Mammary epithelial cell (primary cell): ENCODE measurements at regions of chr10 and their contacts with region 1.

Region 1: DNA sequence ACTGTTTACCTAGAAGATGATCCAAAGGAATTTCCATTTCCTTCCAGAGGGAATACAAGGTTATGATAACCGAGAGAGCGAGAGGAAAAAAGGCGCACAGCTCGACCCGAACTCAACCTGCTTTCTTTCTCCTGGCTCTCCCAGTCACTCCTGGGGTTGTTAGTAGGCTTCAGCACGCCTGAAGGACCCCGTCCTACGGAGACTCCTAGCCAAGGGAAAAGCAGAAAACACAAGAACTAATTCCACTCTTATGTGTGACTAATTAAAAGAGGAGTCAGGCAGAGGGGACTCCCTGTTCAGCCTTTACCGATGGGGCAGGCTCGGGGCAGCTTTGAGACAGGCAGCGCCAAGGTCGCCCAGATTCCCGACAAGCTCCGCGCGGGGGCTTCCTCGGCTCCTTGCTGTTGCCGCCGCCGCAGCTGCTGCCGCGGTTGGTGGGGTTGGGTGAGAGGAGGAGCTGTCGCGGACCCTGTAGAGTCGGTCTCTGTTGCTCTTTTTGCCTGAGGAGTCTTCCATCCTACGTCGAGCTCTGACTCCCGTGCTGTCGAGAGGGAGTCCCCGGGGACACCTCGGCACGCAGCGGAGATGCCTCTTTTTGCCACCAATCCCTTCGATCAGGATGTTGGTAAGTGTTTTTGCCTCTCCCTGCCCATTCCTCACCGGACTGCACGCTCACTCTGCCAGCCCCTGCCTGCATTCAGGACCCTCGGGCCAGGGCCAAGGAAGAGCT is at the start of gene STAM:
- DNase-seq: peak; percentile 90
- H3K4me3 ChIP-seq: peak within 1 kb of the TSS; percentile 83 to 93 (median 83)
- H3K27ac ChIP-seq: peak within 1 kb of the TSS; percentile 98
- H3K4me1 ChIP-seq: peaks cover 21% of the 10 kb centered on the region
- H3K27me3 ChIP-seq: no peaks in the 10 kb centered on the region
- CTCF ChIP-seq: no peak
- total RNA-seq, gene STAM: 32.0 to 35.9 TPM

Region 2: DNA sequence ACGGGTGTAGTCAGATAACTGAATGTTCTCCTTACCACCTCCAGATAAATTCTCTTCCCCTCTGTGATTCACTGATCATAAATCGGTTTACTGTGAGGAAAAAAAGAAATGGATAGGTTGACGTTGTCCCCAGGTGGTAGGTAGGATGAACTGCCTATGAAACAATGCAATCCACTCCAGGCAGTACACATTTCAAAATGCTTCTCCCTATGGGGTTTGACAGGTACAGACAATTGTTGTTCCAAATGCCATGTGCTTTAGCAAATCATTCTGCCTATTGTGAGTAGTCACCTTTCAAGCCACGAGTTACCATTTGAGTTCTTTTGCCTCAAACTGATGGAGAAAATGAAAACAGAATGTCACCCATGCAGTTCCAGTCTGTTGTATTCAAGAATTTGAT is 394.1 kb before region 1 on chr10:
- CTCF ChIA-PET with region 1: no interaction called
- dilution Hi-C with region 1: no loop called
- in situ Hi-C with region 1: no loop called
- intact Hi-C with region 1: no loop called
- DNase-seq: peak; percentile 46
- H3K4me3 ChIP-seq: no peak overlapping the region
- H3K27ac ChIP-seq: no peak overlapping the region
- H3K4me1 ChIP-seq: peaks cover 9% of the 10 kb centered on the region
- H3K27me3 ChIP-seq: no peaks in the 10 kb centered on the region
- CTCF ChIP-seq: peak; percentile 68 to 79

Region 3: GRCh38 chr10:17665747-17666146 is 21.8 kb after region 1 on chr10:
- CTCF ChIA-PET with region 1: no interaction called
- dilution Hi-C with region 1: no loop called
- in situ Hi-C with region 1: no loop called
- intact Hi-C with region 1: loop called (anchors 2 kb)
- DNase-seq: peak; percentile 77
- H3K4me3 ChIP-seq: peak overlapping the region in 1 of 3 experiments; percentile 38
- H3K27ac ChIP-seq: peak overlapping the region; percentile 90
- H3K4me1 ChIP-seq: peaks cover 4% of the 10 kb centered on the region
- H3K27me3 ChIP-seq: no peaks in the 10 kb centered on the region
- CTCF ChIP-seq: no peak

Region 4: DNA sequence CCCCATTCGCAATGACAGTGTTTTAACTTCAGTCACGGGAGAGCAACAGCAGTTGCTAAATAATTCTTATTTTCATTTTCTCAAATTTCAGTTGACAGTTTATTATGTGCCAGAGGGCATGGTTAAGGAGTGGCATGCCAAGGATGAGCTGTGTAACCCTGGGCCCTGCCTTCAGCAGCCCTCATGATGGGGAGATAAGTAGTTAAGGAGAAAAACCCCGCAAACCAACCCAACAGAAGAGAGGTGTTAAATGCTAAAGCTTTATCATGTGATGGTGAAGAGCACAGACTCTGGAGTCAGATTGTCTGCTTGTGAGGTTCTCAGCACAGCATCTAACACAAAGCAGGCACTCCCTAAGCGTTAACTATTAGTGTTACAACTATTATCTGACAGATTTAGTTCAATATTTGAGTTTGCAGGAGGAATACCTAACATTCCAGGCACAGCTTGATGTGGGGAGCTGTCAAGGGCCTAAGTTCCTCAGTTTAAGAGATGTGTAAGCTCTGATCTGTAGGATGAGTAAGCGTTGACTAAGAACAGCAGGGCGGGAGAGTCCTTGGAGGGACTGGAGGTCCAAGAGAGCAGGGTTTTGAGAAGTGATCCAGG is 29.6 kb after region 1 on chr10:
- CTCF ChIA-PET with region 1: no interaction called
- dilution Hi-C with region 1: no loop called
- in situ Hi-C with region 1: no loop called
- intact Hi-C with region 1: loop called (anchors 5 kb)
- DNase-seq: peak; percentile 86
- H3K4me3 ChIP-seq: no peak overlapping the region
- H3K27ac ChIP-seq: peak overlapping the region; percentile 6
- H3K4me1 ChIP-seq: peaks cover 22% of the 10 kb centered on the region
- H3K27me3 ChIP-seq: no peaks in the 10 kb centered on the region
- CTCF ChIP-seq: no peak

Region 5: DNA sequence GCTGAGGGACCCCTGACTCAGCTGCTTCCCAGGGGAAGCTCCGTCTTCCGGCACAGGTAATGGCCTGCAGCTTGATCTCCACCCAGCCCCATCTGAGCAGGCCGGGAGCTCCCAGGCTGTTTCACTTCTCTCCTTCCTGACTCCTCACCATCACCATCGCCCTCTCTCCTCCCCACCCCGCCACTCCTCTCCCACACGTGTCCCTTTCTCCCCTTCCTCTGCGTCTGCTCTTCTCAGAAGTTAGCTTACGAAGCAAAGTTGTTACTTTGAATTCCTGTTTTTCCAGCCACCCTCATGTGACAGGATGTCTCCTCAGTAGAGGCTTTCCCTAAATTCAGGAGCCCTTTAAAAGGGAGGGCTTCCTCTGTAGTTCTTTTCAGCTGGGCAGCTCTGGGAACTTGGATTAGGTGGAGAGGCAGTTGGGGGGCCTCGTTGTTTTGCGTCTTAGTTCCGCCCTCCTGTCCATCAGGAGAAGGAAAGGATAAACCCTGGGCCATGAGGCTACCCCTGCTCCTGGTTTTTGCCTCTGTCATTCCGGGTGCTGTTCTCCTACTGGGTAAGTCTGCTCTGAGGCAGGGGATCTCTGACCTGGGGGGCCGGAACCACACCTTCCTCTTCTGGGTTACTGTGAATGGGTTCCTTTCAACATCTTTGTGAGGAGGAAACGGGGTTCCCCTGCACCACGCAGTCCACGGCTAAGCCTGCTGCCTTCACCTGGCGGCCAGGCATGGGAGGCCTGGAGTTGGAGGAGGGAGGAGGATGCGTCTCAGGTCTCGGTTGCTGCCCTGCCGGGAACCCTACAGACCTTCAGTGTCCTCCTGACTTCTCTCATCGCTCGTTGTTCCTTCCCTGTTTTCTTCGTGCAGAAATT is 165.3 kb after region 1 on chr10 and contains the start of gene MRC1:
- CTCF ChIA-PET with region 1: no interaction called
- dilution Hi-C with region 1: no loop called
- in situ Hi-C with region 1: no loop called
- intact Hi-C with region 1: no loop called
- DNase-seq: no peak
- H3K4me3 ChIP-seq: no peak within 1 kb of the TSS
- H3K27ac ChIP-seq: no peak within 1 kb of the TSS
- H3K4me1 ChIP-seq: no peaks in the 10 kb centered on the region
- H3K27me3 ChIP-seq: no peaks in the 10 kb centered on the region
- CTCF ChIP-seq: no peak
- total RNA-seq, gene MRC1: not detected